ENCODE measurements at regions of chr7 and their contacts with region 1.

Region 1: DNA sequence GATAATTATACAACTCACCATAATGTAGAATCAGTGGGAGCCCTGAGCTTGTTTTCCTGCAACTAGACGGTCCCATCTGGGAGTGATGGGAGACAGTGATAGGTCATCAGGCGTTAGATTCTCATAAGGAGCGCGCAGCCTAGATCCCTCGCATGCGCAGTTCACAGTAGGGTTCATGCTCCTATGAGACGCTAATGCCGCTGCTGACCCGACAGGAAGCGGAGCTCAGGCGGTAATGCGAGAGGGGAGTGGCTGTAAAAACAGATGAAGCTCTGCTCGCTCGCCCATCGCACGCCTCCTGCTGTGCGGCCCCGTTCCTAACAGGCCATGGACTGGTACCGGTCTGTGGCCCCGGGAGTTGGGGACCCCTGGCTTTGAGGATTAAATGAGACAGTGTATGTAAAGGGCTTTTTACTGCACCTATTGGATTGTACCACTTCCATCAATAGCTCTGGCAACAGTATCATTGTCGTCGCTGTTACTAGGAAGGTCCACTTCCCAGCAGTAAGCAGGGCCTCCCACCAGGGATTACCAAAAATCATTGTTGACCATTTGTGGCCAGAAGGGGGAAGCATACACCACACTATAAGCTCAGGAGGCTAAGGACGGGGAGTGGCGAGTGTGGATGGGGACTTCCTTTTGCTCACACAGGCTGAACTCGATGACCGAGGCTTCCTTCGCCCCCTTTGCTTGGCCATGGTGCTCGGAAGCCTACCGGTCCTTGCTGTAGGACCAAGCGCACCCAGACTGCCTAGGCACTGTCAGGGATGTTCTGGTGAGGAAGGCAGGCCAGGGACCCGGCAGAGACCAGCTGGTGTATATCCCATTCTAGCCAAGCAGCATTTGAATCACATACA is 26.4 kb downstream of the AKR1B1 start:
- DNase-seq: peak; percentile 83
- H3K4me3 ChIP-seq: peak overlapping the region; percentile 46
- H3K27ac ChIP-seq: peak overlapping the region; percentile 82
- H3K27me3 ChIP-seq: peaks cover 3% of the 10 kb centered on the region
- CTCF ChIP-seq: peak; percentile 74

Region 2: GRCh38 chr7:133770863-133771492 is 661.5 kb before region 1 on chr7:
- CTCF ChIA-PET with region 1: no interaction called
- POLR2A ChIA-PET with region 1: no interaction called
- DNase-seq: peak; percentile 6
- H3K4me3 ChIP-seq: no peak overlapping the region
- H3K27ac ChIP-seq: no peak overlapping the region
- H3K27me3 ChIP-seq: no peaks in the 10 kb centered on the region
- CTCF ChIP-seq: no peak

Region 3: DNA sequence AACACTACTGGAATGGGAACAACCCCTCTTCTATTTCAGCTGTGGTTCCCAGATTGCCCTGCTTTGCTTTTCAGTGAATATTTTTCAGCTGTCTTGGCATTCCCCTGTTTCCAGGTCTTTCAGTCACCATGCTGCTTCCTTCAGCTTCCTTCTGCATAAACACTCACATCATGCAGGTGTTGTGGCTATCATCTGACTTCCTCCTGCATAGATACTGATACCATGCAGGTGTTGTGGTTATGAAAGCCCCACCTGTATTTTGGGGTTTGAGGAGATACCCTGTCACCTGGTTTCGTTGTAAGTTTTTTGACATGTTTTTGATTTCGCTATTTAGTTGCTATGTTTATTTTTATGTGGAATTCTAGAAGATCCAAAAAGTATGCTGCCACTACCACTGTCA is 187.3 kb before region 1 on chr7:
- CTCF ChIA-PET with region 1: no interaction called
- POLR2A ChIA-PET with region 1: no interaction called
- DNase-seq: no peak
- H3K4me3 ChIP-seq: no peak overlapping the region
- H3K27ac ChIP-seq: no peak overlapping the region
- H3K27me3 ChIP-seq: no peaks in the 10 kb centered on the region
- CTCF ChIP-seq: no peak

Region 4: GRCh38 chr7:134458806-134459698 is 26.5 kb after region 1 on chr7 and contains the start of gene AKR1B1:
- CTCF ChIA-PET with region 1: interaction called, 42 read pairs
- POLR2A ChIA-PET with region 1: interaction called, 11 read pairs
- DNase-seq: peak; percentile 81
- H3K4me3 ChIP-seq: peak within 1 kb of the TSS; percentile 91
- H3K27ac ChIP-seq: peak within 1 kb of the TSS; percentile 57
- H3K27me3 ChIP-seq: no peaks in the 10 kb centered on the region
- CTCF ChIP-seq: peak; percentile 76
- polyA plus RNA-seq, gene AKR1B1: 337 and 347 TPM in 2 replicates

Region 5: GRCh38 chr7:134480736-134481135 is 48.2 kb after region 1 on chr7:
- CTCF ChIA-PET with region 1: interaction called, 59 read pairs
- POLR2A ChIA-PET with region 1: interaction called, 3 read pairs
- DNase-seq: no peak
- H3K4me3 ChIP-seq: no peak overlapping the region
- H3K27ac ChIP-seq: no peak overlapping the region
- H3K27me3 ChIP-seq: no peaks in the 10 kb centered on the region
- CTCF ChIP-seq: no peak

Region 6: DNA sequence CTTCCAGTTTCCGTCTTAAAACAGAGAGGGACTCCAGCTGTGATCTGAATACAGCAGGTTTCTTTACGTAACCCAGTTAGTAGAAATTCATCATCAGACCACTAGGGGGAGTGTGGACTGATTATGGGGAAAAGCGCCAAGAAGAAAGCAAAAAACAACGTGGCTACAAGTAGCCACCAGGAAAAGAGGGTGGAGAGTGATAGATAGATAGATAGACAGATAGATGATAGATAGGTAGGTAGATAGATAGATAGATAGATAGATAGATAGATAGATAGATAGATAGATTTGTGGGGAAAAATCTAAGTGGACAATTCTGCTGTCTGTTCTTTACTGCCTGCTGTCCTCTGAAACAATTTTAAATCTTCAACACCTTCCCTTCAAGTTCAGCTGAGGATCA is 82.1 kb after region 1 on chr7:
- CTCF ChIA-PET with region 1: interaction called, 260 read pairs
- POLR2A ChIA-PET with region 1: interaction called, 15 read pairs
- DNase-seq: peak; percentile 57
- H3K4me3 ChIP-seq: no peak overlapping the region
- H3K27ac ChIP-seq: no peak overlapping the region
- H3K27me3 ChIP-seq: no peaks in the 10 kb centered on the region
- CTCF ChIP-seq: peak; percentile 82

Region 7: DNA sequence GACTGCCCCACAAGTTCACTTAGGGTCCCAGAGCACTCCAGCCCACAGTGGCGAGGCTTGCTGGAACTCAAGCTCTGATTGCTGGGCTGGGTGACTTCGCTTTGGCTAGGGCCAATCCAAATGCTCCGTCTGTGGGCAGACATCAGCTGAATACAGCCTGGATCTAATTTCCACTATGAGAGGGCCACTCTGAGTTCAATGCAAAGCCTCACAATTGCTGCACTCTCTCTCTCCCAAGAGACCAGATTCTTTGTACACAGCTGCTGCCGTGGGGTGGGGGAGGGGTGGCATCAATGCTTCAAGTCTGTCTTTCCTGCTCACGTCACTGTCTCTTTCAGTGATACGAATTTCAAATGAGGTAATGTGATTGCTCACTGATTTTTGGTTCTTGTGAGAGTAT is 166.8 kb after region 1 on chr7:
- CTCF ChIA-PET with region 1: interaction called, 36 read pairs
- POLR2A ChIA-PET with region 1: interaction called, 3 read pairs
- DNase-seq: no peak
- H3K4me3 ChIP-seq: no peak overlapping the region
- H3K27ac ChIP-seq: no peak overlapping the region
- H3K27me3 ChIP-seq: no peaks in the 10 kb centered on the region
- CTCF ChIP-seq: no peak

Measured in AG04450 (cell line).